Panc1 (cell line): ENCODE measurements at regions of chr4 and their contacts with region 1.

Region 1: DNA sequence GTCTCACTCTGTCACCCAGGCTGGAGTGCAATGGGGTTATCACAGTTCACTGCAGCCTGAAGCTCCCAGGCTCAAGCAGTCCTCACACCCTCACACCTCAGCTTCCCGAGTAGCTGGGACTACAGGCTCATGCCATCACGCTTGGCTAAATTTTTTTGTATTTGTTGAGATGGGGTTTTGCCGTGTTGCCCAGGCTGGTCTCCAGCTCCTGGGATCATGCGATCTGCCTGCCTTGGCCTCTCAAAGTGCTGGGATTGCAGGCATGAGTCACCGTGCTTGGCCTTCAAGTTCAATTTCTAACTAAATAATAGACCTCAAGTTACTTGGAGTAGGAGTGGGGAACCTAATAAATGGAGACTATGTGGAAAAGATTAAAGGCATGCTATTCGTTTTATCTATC is 48.9 kb downstream of the MND1 start:
- DNase-seq: no peak
- ATAC-seq: no peak
- H3K4me3 ChIP-seq: no peak overlapping the region
- H3K27ac ChIP-seq: no peak overlapping the region
- H3K4me1 ChIP-seq: no peaks in the 10 kb centered on the region
- H3K27me3 ChIP-seq: no peaks in the 10 kb centered on the region
- CTCF ChIP-seq: no peak

Region 2: GRCh38 chr4:153018684-153019083 is 374.7 kb before region 1 on chr4:
- CTCF ChIA-PET with region 1: no interaction called
- POLR2A ChIA-PET with region 1: interaction called, 17 read pairs
- in situ Hi-C with region 1: no loop called
- intact Hi-C with region 1: no loop called
- DNase-seq: no peak
- ATAC-seq: no peak
- H3K4me3 ChIP-seq: no peak overlapping the region
- H3K27ac ChIP-seq: no peak overlapping the region
- H3K4me1 ChIP-seq: no peaks in the 10 kb centered on the region
- H3K27me3 ChIP-seq: no peaks in the 10 kb centered on the region
- CTCF ChIP-seq: no peak

Region 3: GRCh38 chr4:153034681-153035080 is 358.7 kb before region 1 on chr4:
- CTCF ChIA-PET with region 1: no interaction called
- POLR2A ChIA-PET with region 1: no interaction called
- in situ Hi-C with region 1: no loop called
- intact Hi-C with region 1: no loop called
- DNase-seq: no peak
- ATAC-seq: no peak
- H3K4me3 ChIP-seq: no peak overlapping the region
- H3K27ac ChIP-seq: no peak overlapping the region
- H3K4me1 ChIP-seq: no peaks in the 10 kb centered on the region
- H3K27me3 ChIP-seq: no peaks in the 10 kb centered on the region
- CTCF ChIP-seq: no peak